Naive thymus-derived CD8-positive, alpha-beta T cell (primary cell): ENCODE measurements at regions of chr17 and their contacts with region 1.

Region 1: GRCh38 chr17:42609182-42609813 is at the starts of genes RETREG3 and TUBG1:
- DNase-seq: peak; percentile 95 to 100 (median 99)
- ATAC-seq: peak; percentile 88 to 91
- H3K4me3 Mint-ChIP-seq: peak within 1 kb of the TSS; percentile 97 to 100 (median 100)
- H3K27ac Mint-ChIP-seq: peak within 1 kb of the TSS; percentile 94 to 100 (median 99)
- H3K4me1 Mint-ChIP-seq: peaks cover 25 to 54% (median 49%) of the 10 kb centered on the region in 4 donors
- H3K27me3 Mint-ChIP-seq: no peaks in the 10 kb centered on the region
- polyA plus RNA-seq, gene RETREG3: 119 to 131 (median 122) TPM
- polyA plus RNA-seq, gene TUBG1: 6.7 to 10.3 (median 7.8) TPM

Region 2: DNA sequence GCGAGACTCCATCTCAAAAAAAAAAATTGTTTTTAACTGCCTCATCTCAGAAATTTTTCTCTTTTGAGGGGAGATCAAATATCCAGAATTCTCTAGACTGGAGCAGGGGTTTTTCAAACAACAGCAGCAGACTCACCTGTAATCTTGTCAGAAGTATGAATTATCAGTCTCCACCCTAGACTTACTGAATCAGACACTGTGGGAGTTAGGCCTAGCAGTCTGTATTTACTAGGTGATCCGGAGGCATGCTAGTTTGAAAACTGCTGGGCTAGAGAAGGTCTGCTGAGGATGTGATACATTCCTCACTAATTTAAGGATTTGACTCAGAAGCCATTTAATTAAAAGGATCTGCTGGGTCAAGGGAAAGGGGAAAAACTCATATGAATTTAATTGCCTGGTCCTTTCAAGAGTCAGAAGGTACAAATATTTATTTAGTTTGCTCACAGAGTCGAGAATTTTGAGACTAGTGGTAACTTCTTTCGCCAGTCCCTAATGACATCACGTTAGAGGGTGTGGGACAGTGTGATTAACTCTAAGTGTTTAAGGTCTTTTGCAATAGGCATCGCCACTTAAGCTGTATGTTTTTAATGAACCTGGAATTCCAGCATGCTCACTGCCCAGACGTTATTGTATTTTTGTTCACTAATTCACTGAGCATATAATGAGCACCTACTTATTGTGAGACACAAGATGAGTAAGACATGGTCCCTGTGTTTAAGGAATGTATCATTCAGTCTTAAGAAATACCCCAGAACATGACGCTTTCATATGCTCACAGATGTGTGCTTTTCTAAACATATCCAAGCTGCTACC is 136.4 kb before region 1 on chr17:
- POLR2A ChIA-PET with region 1: no interaction called
- DNase-seq: no peak
- ATAC-seq: no peak
- H3K4me3 Mint-ChIP-seq: no peak overlapping the region
- H3K27ac Mint-ChIP-seq: peak overlapping the region in 1 of 10 donors; percentile 5
- H3K4me1 Mint-ChIP-seq: peaks cover 2 to 21% (median 5%) of the 10 kb centered on the region in 4 donors
- H3K27me3 Mint-ChIP-seq: no peaks in the 10 kb centered on the region

Region 3: DNA sequence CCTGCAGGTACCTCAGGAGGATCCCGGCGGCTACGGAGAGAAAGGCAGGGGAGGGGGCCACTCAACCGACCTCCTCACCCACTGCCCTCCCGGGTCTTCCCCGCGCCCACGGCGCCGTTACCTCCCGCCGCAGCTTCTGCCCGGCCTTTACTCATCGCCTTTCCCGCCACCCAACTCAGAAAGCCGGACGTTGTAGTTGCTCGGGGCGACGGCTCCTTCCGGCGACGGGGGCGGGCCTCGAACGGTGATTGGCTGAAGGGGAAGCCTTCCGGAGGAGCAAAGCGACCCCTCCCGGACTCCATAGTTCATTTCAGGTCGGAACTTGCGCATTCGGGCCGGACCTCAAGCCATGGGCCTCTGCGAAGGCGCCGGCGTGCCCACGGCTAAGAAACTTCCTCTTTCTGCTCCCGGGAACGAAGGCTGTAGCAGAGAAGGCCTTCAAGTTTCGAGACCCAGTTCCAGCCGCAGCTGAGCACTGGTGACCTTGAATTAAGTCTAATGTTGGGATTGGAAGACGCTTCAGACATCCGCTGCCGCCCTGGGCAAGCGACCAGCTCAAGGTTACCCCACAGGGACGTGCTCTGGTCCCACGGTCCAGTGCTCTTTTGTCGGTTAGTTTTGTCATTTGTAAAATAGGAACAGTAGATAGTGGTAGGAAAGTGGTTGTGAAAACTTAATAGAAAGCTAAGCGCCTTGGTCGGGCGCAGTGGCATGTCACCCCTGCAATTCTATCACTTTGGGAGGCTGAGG is 31.6 kb before region 1 on chr17 and contains the start of gene PSMC3IP:
- POLR2A ChIA-PET with region 1: interaction called, 26 read pairs
- DNase-seq: peak; percentile 81 to 94 (median 86)
- ATAC-seq: peak; percentile 93
- H3K4me3 Mint-ChIP-seq: peak within 1 kb of the TSS; percentile 90 to 100 (median 98)
- H3K27ac Mint-ChIP-seq: peak within 1 kb of the TSS; percentile 86 to 99 (median 96)
- H3K4me1 Mint-ChIP-seq: peaks cover 14 to 39% (median 32%) of the 10 kb centered on the region in 4 donors
- H3K27me3 Mint-ChIP-seq: no peaks in the 10 kb centered on the region
- polyA plus RNA-seq, gene PSMC3IP: 0.69 to 1.1 (median 0.71) TPM

Region 4: DNA sequence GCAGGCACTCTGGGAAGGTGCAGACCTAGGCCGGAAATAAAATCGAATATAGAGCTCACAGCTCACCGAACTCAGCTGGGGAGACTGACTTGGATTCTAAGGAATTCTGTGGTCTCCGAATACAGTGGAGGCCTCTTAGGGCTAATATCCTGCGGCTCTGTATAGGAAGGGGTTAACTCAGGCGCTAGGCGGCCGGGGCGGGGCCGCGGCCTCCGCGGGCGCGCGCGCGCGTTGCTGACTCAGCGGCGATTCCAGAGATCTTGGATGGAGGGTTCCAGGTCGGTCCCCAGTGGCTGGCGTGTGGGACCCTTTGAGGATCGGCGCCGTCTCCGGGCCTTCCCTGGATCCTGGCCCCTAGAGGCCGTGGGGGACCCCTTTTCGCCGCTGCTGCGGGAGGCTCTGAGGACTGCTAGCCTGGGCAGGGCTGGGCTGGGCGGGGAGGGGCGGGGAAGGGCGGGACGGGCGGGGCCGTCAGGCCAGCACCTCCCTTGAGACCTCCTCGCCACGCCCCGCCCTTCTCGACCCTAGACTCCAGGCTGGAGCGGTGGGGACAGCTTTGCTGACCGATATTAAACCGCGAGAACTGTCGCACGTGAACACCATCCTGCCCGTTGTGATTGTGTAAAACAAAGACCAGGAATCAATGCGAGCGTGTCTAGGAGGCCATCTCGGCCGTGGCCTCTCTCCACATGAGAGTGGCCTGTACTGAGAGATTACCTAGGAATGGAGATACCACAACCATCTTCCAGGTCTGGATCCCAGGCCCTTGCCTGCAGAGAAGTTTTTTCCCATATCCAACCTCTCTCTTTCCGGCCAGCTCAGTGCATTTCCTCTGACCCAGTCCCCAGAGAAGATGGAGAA is 68.9 kb after region 1 on chr17:
- POLR2A ChIA-PET with region 1: interaction called, 20 read pairs
- DNase-seq: peak in 9 of 10 donors; percentile 40 to 76 (median 58)
- ATAC-seq: peak in 1 of 2 donors; percentile 17
- H3K4me3 Mint-ChIP-seq: peak overlapping the region; percentile 82 to 93 (median 92)
- H3K27ac Mint-ChIP-seq: peak overlapping the region; percentile 25 to 90 (median 76)
- H3K4me1 Mint-ChIP-seq: peaks cover 30 to 66% (median 64%) of the 10 kb centered on the region in 4 donors
- H3K27me3 Mint-ChIP-seq: peaks cover 14 to 56% (median 32%) of the 10 kb centered on the region in 5 donors